Activated CD8-positive, alpha-beta memory T cell treated with anti-CD3 and anti-CD28 coated beads, Interleukin-2, amount 10 ng/mL, durations not matched to agents 7 days and 5 days (primary cell): ENCODE measurements at regions of chr17 and their contacts with region 1.

Region 1: DNA sequence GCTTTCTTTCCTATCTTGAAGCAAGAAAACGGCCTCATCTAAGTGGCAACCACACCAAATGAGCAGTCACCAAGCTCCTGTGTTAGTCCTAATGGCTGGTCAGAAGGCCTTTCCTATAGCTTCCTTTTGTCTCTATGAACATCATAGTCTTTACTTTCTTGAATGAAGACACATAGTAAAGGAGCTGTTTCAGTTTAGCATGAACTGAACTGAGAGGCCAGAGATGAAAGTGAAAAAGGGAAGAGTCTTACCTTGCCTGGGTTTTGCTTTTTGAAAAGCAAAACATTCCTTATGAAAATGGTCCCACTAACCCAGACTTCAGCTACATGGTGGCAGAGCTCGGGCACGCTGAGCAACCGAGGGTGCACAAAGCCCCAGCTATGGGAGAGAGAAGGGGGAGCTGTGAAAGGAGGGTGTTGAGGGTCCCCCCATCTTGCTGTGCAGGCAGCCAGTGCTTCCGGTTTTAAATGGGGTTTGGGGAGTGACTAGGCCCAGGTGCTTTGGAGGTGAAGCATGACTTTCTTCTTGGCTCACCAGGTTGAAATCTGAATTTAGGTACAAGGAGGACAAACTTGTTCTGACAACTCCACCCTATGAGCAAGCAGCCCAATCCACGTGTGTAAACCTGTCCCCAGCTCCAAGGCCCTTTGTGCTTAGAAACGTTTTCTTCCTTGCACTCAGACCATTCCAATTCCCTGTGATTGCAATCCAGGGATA is 9.1 kb upstream of the PSMC3IP start:
- DNase-seq: no peak
- ATAC-seq: no peak
- H3K4me3 Mint-ChIP-seq: no peak overlapping the region
- H3K27ac Mint-ChIP-seq: no peak overlapping the region
- H3K4me1 Mint-ChIP-seq: peaks cover 4% of the 10 kb centered on the region
- H3K27me3 Mint-ChIP-seq: no peaks in the 10 kb centered on the region

Region 2: DNA sequence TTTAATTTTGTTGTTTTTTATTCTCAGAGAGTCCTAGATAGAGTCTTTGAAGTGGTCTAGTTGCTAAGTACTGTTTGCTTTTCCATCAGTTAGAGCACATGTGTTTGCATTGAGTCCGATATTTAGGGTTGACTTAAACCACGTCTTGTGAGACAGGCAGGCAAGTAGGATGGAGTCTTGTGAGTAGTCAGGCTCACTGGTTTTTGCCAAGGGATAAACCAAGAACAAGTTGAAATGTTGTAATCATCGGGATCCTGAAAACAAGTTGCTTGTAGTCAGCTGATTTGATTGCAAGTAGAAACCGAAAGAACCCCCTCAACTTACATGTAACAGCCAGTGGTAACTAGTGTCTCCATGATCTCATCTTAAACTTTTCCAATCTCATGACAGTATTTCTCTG is 110.8 kb before region 1 on chr17:
- CTCF ChIA-PET with region 1: no interaction called
- DNase-seq: no peak
- ATAC-seq: no peak
- H3K4me3 Mint-ChIP-seq: no peak overlapping the region
- H3K27ac Mint-ChIP-seq: no peak overlapping the region
- H3K4me1 Mint-ChIP-seq: peaks cover 5% of the 10 kb centered on the region
- H3K27me3 Mint-ChIP-seq: peaks cover 16% of the 10 kb centered on the region

Region 3: GRCh38 chr17:42598905-42599304 is 12.2 kb after region 1 on chr17:
- CTCF ChIA-PET with region 1: interaction called, 10 read pairs
- DNase-seq: no peak
- ATAC-seq: no peak
- H3K4me3 Mint-ChIP-seq: no peak overlapping the region
- H3K27ac Mint-ChIP-seq: no peak overlapping the region
- H3K4me1 Mint-ChIP-seq: peaks cover 3% of the 10 kb centered on the region
- H3K27me3 Mint-ChIP-seq: no peaks in the 10 kb centered on the region